ENCODE measurements at regions of chr12 and their contacts with region 1.

Region 1: DNA sequence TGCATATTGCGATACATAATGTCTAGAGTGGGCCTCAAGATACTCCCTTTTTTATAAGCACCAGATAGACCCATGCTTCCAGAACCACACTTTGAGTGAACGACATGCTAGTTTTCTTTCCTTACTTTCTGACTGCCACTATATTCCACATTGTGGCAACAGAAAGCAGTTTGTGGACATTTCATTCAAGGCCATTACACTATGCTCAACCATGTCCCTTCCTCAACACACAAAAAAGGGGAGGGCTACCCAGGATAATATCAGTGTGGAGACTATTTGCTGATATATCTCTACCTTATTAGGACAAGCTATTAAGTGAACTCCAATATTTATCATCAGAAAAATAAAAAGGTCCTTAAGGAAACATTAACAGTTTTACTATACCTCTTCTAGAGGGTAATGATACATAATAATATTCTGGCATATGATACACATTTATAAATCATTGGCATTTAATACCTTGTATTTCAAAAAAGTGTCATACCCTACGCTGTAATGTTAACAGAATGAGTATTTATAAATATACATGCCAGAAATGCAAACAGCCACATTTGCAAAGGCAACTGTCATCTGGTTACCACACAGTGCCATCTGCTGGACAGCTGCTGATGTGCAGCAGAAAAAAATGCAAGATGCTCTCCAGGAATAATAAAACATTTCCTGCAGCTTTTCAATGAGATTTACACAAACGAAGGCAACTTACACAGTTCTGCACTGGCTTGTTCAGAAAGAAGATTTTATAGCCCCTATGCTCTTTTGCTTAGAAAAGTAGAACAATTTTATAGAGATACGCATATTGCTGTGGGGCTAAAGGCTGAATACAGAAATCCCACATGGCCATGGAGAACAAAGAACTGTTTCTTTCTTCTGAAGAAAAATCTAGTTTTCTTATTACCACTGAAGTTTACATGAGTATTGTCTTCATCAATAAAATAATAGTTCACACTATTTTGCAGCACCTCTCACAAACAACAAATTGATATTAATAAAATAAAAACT is 182.2 kb upstream of the GRIP1 start:
- DNase-seq: peak; percentile 35 to 52
- ATAC-seq: peak; percentile 46 to 63 (median 57)
- H3K4me3 ChIP-seq: no peak overlapping the region
- H3K27ac ChIP-seq: no peak overlapping the region
- H3K4me1 ChIP-seq: no peaks in the 10 kb centered on the region
- H3K27me3 ChIP-seq: peaks cover 0 to 6% (median 0%) of the 10 kb centered on the region in 3 donors
- CTCF ChIP-seq: peak; percentile 88

Region 2: DNA sequence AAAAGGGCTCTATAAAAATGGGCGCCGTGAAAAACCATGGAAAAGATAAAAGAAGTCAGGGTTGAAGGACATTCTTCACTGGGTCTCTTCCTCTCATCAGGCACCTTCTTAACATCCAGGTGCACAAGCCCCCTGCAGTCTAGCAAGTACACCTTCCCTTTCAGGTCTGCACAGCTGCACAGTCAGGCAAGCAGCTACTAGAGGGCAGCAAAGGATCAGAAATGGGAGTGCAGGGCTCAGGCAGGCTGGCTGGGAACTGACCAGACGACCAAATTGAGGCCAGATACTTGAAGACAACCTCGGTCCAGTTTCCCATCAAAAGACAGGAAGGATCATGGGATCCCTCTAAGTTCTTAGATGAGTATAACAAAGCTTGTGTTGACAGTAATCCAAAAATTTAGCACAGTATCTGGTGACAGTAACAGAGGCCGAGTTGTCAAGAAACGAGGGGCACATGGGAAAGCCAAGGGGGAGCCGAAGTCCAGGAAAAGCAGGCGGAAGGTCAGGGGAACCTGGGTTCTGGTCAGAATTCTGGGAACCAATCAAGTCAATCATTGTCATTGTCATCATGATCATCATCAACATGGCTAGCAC is 172.1 kb before region 1 on chr12:
- intact Hi-C with region 1: loop called (anchors 2 to 5 kb)
- DNase-seq: no peak
- ATAC-seq: peak in 2 of 4 donors; percentile 55 to 66
- H3K4me3 ChIP-seq: no peak overlapping the region
- H3K27ac ChIP-seq: no peak overlapping the region
- H3K4me1 ChIP-seq: no peaks in the 10 kb centered on the region
- H3K27me3 ChIP-seq: peaks cover 0 to 4% (median 0%) of the 10 kb centered on the region in 3 donors
- CTCF ChIP-seq: peak; percentile 35

Measured in psoas muscle (tissue), 8 donors.